ENCODE measurements at regions of chr15 and their contacts with region 1.

Region 1: DNA sequence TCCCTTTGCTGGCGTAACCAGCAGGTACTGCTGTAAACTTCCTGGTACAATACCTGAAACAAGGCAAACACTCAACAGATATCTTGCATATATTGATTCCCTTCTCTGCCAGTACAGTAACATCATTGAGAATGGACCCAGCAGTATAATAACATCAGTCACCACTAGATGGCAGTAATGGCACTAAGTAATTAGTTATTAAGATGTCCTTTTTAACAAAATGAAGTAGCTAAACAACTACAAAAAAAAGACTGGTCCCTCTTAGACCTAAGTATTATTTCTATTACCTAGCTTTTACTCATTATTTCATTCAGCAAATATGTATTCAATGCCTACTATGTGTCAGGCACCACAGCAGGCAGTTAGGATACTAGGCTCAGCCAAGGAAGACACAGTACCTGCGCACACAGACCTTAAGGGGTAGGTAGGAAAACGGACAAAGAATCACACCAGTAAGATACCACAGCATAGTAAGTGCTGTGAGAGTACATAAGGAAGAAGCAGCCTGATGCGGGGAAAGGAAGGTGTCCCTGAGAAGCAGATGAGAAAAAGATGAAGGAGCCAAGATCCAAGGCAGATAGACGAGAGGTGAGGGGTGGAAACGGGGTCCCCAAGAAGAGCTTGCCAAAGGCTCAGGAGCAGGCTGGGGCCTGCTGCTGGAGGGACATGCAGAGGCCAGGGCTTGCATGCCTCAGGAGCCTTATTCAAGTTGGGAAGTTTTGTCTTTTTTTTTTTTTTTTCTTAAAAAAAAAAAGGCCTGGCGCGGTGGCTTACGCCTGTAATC is 102.8 kb upstream of the CHD2 start:
- DNase-seq: no peak
- ATAC-seq: peak in 3 of 4 donors; percentile 60 to 71 (median 62)
- H3K4me3 ChIP-seq: no peak overlapping the region
- H3K27ac ChIP-seq: peak overlapping the region in 5 of 12 donors; percentile 4 to 40 (median 35)
- H3K4me1 ChIP-seq: peaks cover 0 to 17% (median 5%) of the 10 kb centered on the region in 12 donors
- H3K27me3 ChIP-seq: no peaks in the 10 kb centered on the region
- CTCF ChIP-seq: peak; percentile 71 to 87 (median 78)
- POLR2A ChIP-seq: no peak

Region 2: DNA sequence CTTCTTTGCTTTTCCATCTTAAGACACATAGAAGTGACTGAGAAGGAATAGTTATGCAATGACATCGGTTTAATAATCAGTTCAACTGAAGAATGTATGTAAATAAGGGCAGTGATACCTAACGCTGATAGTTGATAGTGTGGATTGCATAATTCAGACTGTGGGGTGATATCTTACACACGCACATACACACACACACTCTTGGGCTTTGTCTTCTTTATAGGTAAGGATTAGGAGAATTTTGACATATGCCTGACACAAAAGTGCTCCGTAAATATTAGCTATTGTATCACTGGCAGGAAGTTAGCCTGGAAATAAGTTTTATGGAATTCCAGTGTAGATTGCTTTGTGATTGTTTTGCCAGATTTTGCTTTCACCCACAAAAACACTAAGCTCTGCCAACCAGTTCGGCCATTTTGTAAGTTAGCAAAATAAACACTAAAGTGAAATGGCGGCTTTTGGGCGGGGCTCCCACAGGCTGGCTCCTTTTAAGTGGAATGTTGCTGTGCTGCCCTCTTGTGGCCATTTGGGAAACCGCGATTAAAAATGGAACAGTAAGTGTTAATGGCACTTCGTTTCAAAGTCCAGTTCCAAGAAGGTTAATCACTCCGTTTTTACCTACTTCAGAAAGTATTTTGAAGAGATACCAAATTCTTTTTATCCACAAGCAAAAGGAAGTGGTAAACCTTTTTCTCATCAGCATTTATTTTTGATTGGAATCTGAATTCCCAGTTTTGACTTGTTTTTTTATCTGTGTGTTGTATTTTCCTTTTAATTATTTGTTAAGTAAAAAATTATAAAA is 120.4 kb after region 1 on chr15:
- intact Hi-C with region 1: loop called in 3 of 10 experiments (anchors 1 to 5 kb)
- DNase-seq: peak; percentile 90 to 95 (median 94)
- ATAC-seq: peak; percentile 40 to 74 (median 68)
- H3K4me3 ChIP-seq: peak overlapping the region in 7 of 12 donors; percentile 2 to 48 (median 24)
- H3K27ac ChIP-seq: peak overlapping the region; percentile 69 to 99 (median 84)
- H3K4me1 ChIP-seq: peaks cover 3 to 100% (median 79%) of the 10 kb centered on the region in 12 donors
- H3K27me3 ChIP-seq: no peaks in the 10 kb centered on the region
- CTCF ChIP-seq: peak; percentile 87 to 96 (median 92)
- POLR2A ChIP-seq: peak in 1 of 2 donors; percentile 32

Region 3: GRCh38 chr15:92992720-92993119 is 195.4 kb after region 1 on chr15:
- intact Hi-C with region 1: loop called in 2 of 10 experiments (anchors 10 kb)
- DNase-seq: peak in 3 of 5 donors; percentile 16 to 38 (median 35)
- ATAC-seq: peak; percentile 70 to 90 (median 84)
- H3K4me3 ChIP-seq: no peak overlapping the region
- H3K27ac ChIP-seq: peak overlapping the region in 7 of 12 donors; percentile 1 to 59 (median 20)
- H3K4me1 ChIP-seq: peaks cover 0 to 10% (median 0%) of the 10 kb centered on the region in 12 donors
- H3K27me3 ChIP-seq: no peaks in the 10 kb centered on the region
- CTCF ChIP-seq: no peak
- POLR2A ChIP-seq: no peak

Region 4: GRCh38 chr15:93001881-93002280 is 204.5 kb after region 1 on chr15:
- intact Hi-C with region 1: loop called in 4 of 10 experiments (anchors 10 kb)
- DNase-seq: no peak
- ATAC-seq: no peak
- H3K4me3 ChIP-seq: no peak overlapping the region
- H3K27ac ChIP-seq: peak overlapping the region in 2 of 12 donors; percentile 18 to 32
- H3K4me1 ChIP-seq: no peaks in the 10 kb centered on the region
- H3K27me3 ChIP-seq: no peaks in the 10 kb centered on the region
- CTCF ChIP-seq: peak in 5 of 12 donors; percentile 5 to 34 (median 11)
- POLR2A ChIP-seq: no peak

Region 5: GRCh38 chr15:93012786-93013185 is 215.4 kb after region 1 on chr15:
- intact Hi-C with region 1: loop called in 4 of 10 experiments (anchors 5 to 10 kb)
- DNase-seq: no peak
- ATAC-seq: peak in 1 of 4 donors; percentile 29
- H3K4me3 ChIP-seq: no peak overlapping the region
- H3K27ac ChIP-seq: no peak overlapping the region
- H3K4me1 ChIP-seq: peaks cover 0 to 5% (median 0%) of the 10 kb centered on the region in 12 donors
- H3K27me3 ChIP-seq: no peaks in the 10 kb centered on the region
- CTCF ChIP-seq: no peak
- POLR2A ChIP-seq: no peak

Region 6: DNA sequence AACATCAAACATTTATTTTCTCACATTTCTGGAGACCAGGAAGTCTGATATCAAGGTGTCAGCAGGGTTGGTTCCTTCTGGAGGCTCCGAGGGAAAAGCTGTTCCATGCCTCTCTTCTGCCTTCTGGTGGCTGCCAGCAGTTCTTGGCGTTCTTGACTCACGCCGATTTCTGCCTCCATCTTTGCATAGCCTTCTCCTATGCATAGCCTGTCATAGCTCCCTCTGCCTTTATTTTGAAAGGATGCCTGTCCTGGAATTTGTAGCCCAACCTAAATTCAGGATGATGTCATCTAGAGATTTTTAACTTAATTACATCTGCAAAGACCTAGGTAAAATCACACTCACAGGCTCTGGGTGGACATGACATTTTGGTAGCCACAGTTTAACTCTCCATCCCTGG is 221.2 kb after region 1 on chr15:
- intact Hi-C with region 1: loop called in 3 of 10 experiments (anchors 5 to 10 kb)
- DNase-seq: no peak
- ATAC-seq: peak in 1 of 4 donors; percentile 7
- H3K4me3 ChIP-seq: no peak overlapping the region
- H3K27ac ChIP-seq: peak overlapping the region in 2 of 12 donors; percentile 13 to 51
- H3K4me1 ChIP-seq: peaks cover 0 to 29% (median 0%) of the 10 kb centered on the region in 12 donors
- H3K27me3 ChIP-seq: no peaks in the 10 kb centered on the region
- CTCF ChIP-seq: peak in 2 of 12 donors; percentile 19 to 23
- POLR2A ChIP-seq: no peak

Region 7: DNA sequence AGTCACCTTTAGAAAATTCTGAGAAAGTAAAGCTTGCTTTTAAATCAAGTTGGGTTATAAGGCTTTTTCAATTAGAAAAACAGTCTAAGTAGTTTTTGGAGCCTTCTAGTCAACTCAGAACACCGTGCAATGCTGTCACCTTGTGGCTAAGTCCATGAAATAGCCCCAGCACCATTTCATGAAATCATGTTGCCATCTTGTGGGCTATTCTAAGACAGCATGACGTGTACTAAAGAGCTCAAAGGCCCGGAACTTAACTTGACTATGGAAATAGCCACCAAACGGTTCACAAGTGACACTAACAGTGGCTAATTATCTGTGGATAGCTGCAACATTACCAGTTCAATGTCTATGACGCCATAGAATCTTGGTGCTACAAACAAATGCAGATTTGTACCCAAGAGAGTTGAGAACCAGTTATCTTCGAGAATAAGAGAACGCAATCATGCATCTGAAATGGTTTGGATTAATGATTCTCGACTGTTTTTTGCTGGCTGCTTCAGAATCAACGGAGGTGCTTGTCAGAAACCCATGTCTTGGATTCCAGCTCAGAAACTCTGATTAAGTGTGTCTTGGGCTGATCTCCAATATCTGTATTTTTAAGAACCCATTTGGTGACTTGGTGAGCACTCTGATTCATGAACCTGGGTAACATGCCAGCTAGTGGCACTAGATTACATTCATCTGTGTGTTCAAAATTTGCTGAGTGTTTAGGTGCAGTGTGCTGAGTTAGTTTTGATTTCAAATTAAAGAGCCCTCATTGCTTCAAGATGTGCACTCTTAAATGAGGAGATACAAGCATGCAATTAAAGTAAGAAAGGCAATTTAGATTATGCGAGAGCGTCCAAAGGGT is 1322.8 kb after region 1 on chr15:
- intact Hi-C with region 1: loop called in 3 of 10 experiments (anchors 10 kb)
- DNase-seq: peak in 4 of 5 donors; percentile 43 to 65 (median 54)
- ATAC-seq: peak; percentile 90 to 98 (median 96)
- H3K4me3 ChIP-seq: no peak overlapping the region
- H3K27ac ChIP-seq: peak overlapping the region in 11 of 12 donors; percentile 20 to 72 (median 60)
- H3K4me1 ChIP-seq: peaks cover 0 to 7% (median 0%) of the 10 kb centered on the region in 12 donors
- H3K27me3 ChIP-seq: no peaks in the 10 kb centered on the region
- CTCF ChIP-seq: peak; percentile 65 to 94 (median 86)
- POLR2A ChIP-seq: no peak